Endothelial cell of umbilical vein (primary cell): ENCODE measurements at regions of chr3 and their contacts with region 1.

Region 1: DNA sequence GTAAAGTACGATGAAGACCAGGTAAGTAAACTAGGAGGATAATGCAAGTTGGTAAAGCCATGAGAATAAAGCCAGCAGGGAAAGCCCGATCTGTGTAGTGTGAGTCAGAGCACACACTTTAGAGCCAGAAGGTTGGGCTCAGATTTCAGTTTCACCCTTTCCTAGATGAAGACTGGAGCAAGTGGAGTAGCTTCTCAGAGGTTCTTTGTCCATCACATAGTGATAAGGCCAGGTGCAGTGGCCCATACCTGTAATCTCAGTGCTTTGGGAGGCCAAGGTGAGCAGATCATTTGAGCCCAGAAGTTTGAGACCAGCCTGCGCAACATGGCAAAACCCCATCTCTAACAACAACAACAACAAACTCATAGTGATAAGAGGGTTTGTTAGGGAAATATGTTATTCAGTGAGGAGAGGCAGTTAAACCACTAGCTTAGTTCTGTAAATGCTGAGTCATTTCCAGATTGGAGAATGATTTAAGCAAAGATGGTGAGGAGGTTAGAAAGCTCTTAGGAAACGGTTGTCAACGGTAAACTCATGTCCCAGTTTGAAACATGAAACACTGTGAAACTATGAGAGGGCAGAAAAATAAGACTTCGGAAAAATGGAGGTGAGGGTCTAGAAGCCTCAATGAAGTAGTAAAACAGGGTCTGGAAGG is 39.0 kb downstream of the IL12A start:
- DNase-seq: peak; percentile 19
- H3K4me3 ChIP-seq: no peak overlapping the region
- H3K27ac ChIP-seq: no peak overlapping the region
- H3K4me1 ChIP-seq: peaks cover 4% of the 10 kb centered on the region
- H3K27me3 ChIP-seq: no peaks in the 10 kb centered on the region
- CTCF ChIP-seq: no peak
- POLR2A ChIP-seq: no peak

Region 2: DNA sequence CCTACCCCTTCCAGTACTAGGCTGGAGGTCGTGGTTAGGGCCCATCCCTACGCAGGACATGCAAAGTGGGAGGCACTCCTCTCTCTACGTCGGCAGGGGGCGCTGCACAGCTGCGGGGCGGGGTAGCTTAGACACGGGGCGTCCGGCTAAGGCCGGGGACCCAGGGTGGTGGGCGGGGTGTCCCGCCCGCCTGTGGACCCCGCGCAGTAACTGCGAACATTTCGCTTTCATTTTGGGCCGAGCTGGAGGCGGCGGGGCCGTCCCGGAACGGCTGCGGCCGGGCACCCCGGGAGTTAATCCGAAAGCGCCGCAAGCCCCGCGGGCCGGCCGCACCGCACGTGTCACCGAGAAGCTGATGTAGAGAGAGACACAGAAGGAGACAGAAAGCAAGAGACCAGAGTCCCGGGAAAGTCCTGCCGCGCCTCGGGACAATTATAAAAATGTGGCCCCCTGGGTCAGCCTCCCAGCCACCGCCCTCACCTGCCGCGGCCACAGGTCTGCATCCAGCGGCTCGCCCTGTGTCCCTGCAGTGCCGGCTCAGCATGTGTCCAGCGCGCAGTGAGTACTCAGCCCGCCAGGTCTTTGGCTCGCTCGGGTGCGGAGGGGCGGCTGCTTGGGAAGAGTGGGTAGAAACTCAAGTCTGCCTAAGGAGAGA is 38.9 kb before region 1 on chr3 and contains the start of gene IL12A:
- CTCF ChIA-PET with region 1: interaction called, 10 read pairs
- POLR2A ChIA-PET with region 1: no interaction called
- dilution Hi-C with region 1: no loop called
- intact Hi-C with region 1: no loop called
- DNase-seq: peak; percentile 75
- H3K4me3 ChIP-seq: peak within 1 kb of the TSS; percentile 58 to 71 (median 60)
- H3K27ac ChIP-seq: no peak within 1 kb of the TSS
- H3K4me1 ChIP-seq: peaks cover 4% of the 10 kb centered on the region
- H3K27me3 ChIP-seq: no peaks in the 10 kb centered on the region
- CTCF ChIP-seq: peak; percentile 96 to 98
- POLR2A ChIP-seq: no peak
- total RNA-seq, gene IL12A: 1.5 and 1.7 TPM in 2 replicates

Region 3: DNA sequence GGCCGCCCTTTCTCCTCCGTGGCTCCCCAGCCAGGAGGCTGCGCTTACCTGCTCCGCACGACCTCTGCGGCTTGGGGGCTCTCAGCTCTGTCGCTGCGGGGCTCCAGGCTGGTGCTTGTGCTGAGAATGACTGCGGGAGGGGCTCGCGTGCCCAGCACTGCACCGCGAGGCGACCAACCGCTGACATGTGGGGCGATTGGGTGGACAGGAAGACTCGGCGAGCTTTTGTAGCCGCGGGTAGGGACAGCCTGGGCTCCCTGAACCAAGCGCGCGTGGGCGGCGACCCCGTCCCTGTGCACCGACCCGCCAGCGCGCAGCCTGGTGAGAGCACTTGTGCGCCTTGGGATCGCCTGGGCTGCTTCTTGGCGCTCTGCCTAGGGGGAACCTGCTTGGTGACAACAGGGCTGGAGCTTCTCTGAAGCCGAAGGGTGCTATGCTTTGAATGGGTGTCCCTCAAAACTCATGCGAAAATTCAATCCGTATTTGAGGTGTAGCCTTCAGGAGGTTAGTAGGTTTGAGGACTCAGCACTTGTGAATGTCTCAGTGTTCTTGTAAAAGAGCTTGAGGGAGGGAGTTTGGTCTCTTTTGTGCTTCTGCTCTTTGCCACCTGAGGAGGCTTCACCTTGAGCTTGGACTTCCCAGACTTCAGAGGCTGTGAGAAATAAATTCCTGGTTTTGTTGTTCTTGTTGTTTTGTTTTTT is 11.3 kb after region 1 on chr3:
- CTCF ChIA-PET with region 1: interaction called, 13 read pairs
- POLR2A ChIA-PET with region 1: no interaction called
- dilution Hi-C with region 1: no loop called
- intact Hi-C with region 1: no loop called
- DNase-seq: peak; percentile 20
- H3K4me3 ChIP-seq: no peak overlapping the region
- H3K27ac ChIP-seq: no peak overlapping the region
- H3K4me1 ChIP-seq: no peaks in the 10 kb centered on the region
- H3K27me3 ChIP-seq: peaks cover 29 to 36% of the 10 kb centered on the region in 2 experiments
- CTCF ChIP-seq: no peak
- POLR2A ChIP-seq: no peak

Region 4: GRCh38 chr3:160163229-160163878 is 135.7 kb after region 1 on chr3:
- CTCF ChIA-PET with region 1: interaction called, 38 read pairs
- POLR2A ChIA-PET with region 1: no interaction called
- dilution Hi-C with region 1: no loop called
- intact Hi-C with region 1: loop called (anchors 1 kb)
- DNase-seq: peak; percentile 46
- H3K4me3 ChIP-seq: no peak overlapping the region
- H3K27ac ChIP-seq: no peak overlapping the region
- H3K4me1 ChIP-seq: no peaks in the 10 kb centered on the region
- H3K27me3 ChIP-seq: no peaks in the 10 kb centered on the region
- CTCF ChIP-seq: peak in 1 of 2 donors; percentile 8
- POLR2A ChIP-seq: no peak

Region 5: GRCh38 chr3:160343132-160343531 is 315.5 kb after region 1 on chr3:
- CTCF ChIA-PET with region 1: interaction called, 22 read pairs
- POLR2A ChIA-PET with region 1: no interaction called
- dilution Hi-C with region 1: no loop called
- intact Hi-C with region 1: loop called (anchors 1 kb)
- DNase-seq: peak; percentile 23
- H3K4me3 ChIP-seq: no peak overlapping the region
- H3K27ac ChIP-seq: no peak overlapping the region
- H3K4me1 ChIP-seq: no peaks in the 10 kb centered on the region
- H3K27me3 ChIP-seq: no peaks in the 10 kb centered on the region
- CTCF ChIP-seq: peak in 1 of 2 donors; percentile 9
- POLR2A ChIP-seq: no peak

Region 6: DNA sequence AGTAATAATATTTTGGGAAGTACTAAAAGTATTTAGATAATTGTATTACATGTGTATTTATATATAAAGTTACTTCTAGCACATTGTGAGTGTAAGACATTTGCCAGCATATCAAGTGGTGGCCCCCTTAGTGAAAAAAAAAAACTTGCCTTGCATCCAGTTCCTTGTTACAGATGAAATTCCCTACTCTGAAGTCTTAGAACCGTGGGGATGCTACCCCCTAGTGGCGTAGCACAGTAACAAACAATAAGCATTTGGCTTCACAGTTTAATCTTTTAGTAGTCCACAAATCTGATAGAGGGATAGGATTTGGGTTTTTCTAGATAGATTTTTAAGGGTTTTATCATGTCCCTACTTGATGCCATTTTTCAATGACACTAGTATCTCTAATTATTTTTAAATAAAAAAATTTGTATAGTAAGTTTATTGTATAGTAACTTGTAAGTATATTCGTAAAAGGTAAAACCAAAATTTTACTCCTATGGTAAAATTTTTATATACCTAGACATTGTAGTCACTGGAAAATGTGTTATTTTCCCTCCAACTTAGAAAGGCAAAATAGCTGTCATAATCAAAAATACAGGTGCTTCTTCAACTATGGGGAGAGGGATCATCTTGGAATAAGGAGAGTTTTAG is 386.1 kb after region 1 on chr3:
- CTCF ChIA-PET with region 1: interaction called, 34 read pairs
- POLR2A ChIA-PET with region 1: no interaction called
- dilution Hi-C with region 1: no loop called
- intact Hi-C with region 1: loop called (anchors 1 kb)
- DNase-seq: peak; percentile 86
- H3K4me3 ChIP-seq: no peak overlapping the region
- H3K27ac ChIP-seq: no peak overlapping the region
- H3K4me1 ChIP-seq: peaks cover 8% of the 10 kb centered on the region
- H3K27me3 ChIP-seq: no peaks in the 10 kb centered on the region
- CTCF ChIP-seq: peak; percentile 64 to 71
- POLR2A ChIP-seq: no peak

Region 7: DNA sequence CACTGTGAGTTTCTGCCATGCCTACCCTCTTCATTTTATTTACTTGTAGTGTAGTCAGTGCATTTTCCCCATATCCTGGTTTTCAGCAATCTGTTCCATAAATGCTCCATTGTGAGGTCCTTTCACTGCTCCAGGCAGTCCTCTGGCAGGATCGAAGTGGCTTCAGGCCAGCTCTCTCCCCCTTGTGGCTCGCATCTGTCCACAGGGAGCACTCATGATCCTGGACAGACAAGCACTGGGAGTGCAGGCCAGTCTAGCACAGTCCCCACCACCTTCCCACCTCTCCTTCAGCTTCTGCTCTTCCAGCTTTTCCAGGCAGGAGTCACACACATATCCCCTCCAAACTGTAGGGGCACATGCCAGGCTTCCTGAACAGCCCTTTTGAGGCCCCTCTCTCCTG is 901.9 kb after region 1 on chr3:
- CTCF ChIA-PET with region 1: no interaction called
- POLR2A ChIA-PET with region 1: no interaction called
- dilution Hi-C with region 1: no loop called
- intact Hi-C with region 1: no loop called
- DNase-seq: peak; percentile 19
- H3K4me3 ChIP-seq: no peak overlapping the region
- H3K27ac ChIP-seq: no peak overlapping the region
- H3K4me1 ChIP-seq: no peaks in the 10 kb centered on the region
- H3K27me3 ChIP-seq: no peaks in the 10 kb centered on the region
- CTCF ChIP-seq: peak in 1 of 2 donors; percentile 17
- POLR2A ChIP-seq: no peak